Left cardiac atrium (tissue), 4 donors: ENCODE measurements at regions of chr9 and their contacts with region 1.

Region 1: DNA sequence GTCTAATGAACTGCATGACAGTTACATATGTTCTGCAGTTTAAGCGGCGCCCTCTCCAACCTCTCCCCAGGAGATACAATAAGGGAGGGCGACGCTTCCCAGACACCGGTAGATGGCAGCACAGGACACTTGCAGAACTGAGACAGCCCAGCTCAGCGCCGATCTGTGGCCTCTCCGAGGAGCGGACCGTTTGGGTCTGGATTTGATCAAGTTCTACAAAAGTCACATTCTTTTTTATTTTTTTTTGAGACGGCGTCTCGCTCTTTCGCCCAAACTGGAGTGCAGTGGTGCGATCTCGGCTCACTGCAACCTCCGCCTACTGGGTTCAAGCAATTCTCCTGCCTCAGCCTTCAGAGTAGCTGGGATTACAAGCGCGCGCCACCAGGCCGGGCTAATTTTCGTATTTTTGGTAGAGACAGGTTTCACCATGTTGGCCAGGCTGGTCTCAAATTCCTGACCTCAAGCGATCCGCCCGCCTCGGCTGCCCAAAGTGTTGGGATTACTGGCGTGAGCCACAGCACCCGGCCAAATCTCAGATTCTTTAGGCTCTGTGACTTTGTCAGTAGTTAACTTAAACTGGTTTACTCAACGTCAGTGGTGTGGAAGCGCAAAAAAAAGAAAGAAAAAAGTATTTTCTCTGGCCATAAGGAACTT is 1.4 kb upstream of the ATOSB start:
- DNase-seq: peak; percentile 93
- ATAC-seq: peak; percentile 76 to 82

Region 2: DNA sequence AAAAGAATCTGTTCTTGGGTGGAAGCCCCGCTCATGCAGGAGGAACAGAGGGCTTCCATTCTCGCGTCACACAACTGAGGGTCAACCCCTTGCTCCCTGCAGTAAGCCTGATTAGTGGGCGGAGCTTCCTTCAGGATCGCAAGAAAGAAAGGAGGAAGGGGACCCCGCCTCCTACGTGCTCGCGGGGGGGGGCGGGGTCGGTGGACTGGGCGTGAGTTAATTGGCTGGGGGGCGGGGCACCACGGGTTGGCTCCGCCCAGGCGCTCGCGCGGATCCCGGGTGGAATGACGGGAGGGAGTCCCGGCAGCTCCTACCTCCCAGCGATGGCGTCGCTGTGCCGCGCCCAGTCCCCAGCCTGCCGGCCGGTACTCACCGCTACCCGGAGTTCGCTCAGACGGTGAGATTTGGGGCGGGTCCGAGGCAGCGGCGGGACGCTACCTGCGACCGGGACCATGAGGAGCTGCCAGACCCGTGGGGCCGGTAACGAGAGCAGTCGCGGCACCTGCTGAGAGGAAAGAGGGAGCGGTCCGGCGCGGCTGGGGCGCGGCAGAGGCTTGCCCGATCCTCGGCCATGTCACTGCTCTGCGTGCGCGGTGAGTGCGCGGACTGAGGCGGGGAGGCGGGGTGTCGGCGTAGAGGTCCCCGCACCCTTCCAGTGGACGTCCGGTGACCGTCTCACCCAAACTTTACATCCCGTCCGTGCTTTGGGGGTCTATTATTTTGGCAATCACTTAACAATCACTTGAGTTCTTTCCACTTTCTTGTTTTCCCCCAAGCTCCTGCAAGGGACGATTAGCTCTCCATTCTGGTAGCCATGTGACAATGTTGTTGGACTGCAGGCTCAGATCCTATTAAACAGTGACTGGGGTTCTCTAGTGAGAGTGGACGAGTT is 44.9 kb after region 1 on chr9 and contains the start of gene UNC13B:
- intact Hi-C with region 1: loop called in 1 of 2 experiments (anchors 2 kb)
- DNase-seq: peak; percentile 94
- ATAC-seq: peak; percentile 99 to 100
- total RNA-seq, gene UNC13B: 17.8 to 23.0 TPM

Region 3: GRCh38 chr9:35258676-35259474 is 141.8 kb after region 1 on chr9:
- intact Hi-C with region 1: loop called in 1 of 2 experiments (anchors 1 kb)
- DNase-seq: peak; percentile 78
- ATAC-seq: peak; percentile 70 to 74

Region 4: DNA sequence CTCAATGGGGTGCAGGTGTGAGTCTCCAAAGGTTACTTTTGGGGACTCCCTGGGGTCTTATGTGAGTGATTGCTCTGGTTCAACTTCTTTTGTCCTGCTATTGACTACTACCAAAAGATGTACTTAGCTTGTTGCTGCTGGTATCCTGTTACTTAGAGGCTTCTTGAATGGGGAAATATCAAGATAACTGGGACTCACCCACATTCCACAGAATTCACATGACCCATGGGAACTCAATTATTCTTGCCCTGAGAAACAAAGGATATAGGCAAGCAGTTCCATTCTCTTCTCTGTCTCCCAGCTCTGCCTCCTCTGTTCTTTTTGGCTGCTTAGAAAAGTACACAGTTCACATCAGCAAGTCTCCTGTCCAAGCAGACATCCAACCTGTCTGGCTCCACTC is 150.7 kb after region 1 on chr9:
- intact Hi-C with region 1: loop called in 1 of 2 experiments (anchors 5 kb)
- DNase-seq: no peak
- ATAC-seq: no peak

Region 5: GRCh38 chr9:35481347-35481975 is 364.4 kb after region 1 on chr9:
- intact Hi-C with region 1: loop called (anchors 2 to 5 kb)
- DNase-seq: peak; percentile 40
- ATAC-seq: peak; percentile 53 to 60

Region 6: GRCh38 chr9:35603987-35604577 is 487.1 kb after region 1 on chr9:
- intact Hi-C with region 1: loop called in 1 of 2 experiments (anchors 10 kb)
- DNase-seq: peak; percentile 100
- ATAC-seq: peak; percentile 95 to 97